Endothelial cell of umbilical vein (primary cell): ENCODE measurements at regions of chr11 and their contacts with region 1.

Region 1: DNA sequence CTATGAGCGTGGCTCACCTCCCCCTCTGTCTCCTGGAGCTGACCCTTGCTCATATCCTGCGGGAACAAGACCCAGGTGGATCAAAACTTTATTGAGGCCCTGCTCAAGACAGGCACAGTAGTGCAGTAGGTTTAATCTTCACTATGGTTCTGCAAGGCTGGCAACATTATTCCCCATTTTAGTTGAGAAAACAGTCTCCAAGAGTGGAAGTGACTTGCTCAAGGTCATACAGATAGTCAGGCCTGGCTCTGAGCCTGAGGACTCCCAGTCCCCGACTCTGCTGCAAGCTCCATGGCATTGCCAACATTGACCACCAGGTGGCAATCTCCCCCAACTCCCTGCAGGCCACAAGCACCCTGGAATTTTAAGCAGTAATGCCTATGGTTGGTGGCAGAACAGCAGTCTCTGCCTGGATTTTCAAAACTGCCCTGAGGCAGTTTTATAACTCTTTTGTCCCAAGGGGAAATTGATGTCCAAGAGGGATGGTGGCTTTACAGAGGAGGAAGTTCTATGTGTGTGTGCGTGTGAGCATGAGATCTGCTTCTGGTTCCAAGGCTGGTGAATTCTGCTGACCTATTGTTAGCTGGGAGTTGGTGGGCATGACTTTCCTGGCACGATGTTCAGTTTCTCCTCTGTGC is 34.1 kb downstream of the NEU3 start:
- DNase-seq: peak; percentile 83
- H3K4me3 ChIP-seq: no peak overlapping the region
- H3K27ac ChIP-seq: no peak overlapping the region
- H3K4me1 ChIP-seq: no peaks in the 10 kb centered on the region
- H3K27me3 ChIP-seq: peaks cover 0 to 2% of the 10 kb centered on the region in 2 experiments
- CTCF ChIP-seq: peak; percentile 94 to 97
- POLR2A ChIP-seq: no peak

Region 2: GRCh38 chr11:74909385-74909784 is 113.5 kb before region 1 on chr11:
- CTCF ChIA-PET with region 1: interaction called, 3 read pairs
- POLR2A ChIA-PET with region 1: no interaction called
- dilution Hi-C with region 1: loop called (anchors 25 kb)
- intact Hi-C with region 1: no loop called
- DNase-seq: no peak
- H3K4me3 ChIP-seq: no peak overlapping the region
- H3K27ac ChIP-seq: no peak overlapping the region
- H3K4me1 ChIP-seq: peaks cover 11% of the 10 kb centered on the region
- H3K27me3 ChIP-seq: no peaks in the 10 kb centered on the region
- CTCF ChIP-seq: no peak
- POLR2A ChIP-seq: no peak

Region 3: GRCh38 chr11:74929431-74930363 is 93.2 kb before region 1 on chr11:
- CTCF ChIA-PET with region 1: interaction called, 64 read pairs
- POLR2A ChIA-PET with region 1: no interaction called
- dilution Hi-C with region 1: loop called (anchors 25 kb)
- intact Hi-C with region 1: loop called (anchors 2 kb)
- DNase-seq: peak; percentile 84
- H3K4me3 ChIP-seq: no peak overlapping the region
- H3K27ac ChIP-seq: peak overlapping the region; percentile 23
- H3K4me1 ChIP-seq: peaks cover 25% of the 10 kb centered on the region
- H3K27me3 ChIP-seq: no peaks in the 10 kb centered on the region
- CTCF ChIP-seq: peak; percentile 70 to 78
- POLR2A ChIP-seq: no peak

Region 4: GRCh38 chr11:74966651-74967050 is 56.2 kb before region 1 on chr11:
- CTCF ChIA-PET with region 1: interaction called, 17 read pairs
- POLR2A ChIA-PET with region 1: no interaction called
- dilution Hi-C with region 1: no loop called
- intact Hi-C with region 1: no loop called
- DNase-seq: no peak
- H3K4me3 ChIP-seq: no peak overlapping the region
- H3K27ac ChIP-seq: peak overlapping the region; percentile 33
- H3K4me1 ChIP-seq: no peaks in the 10 kb centered on the region
- H3K27me3 ChIP-seq: no peaks in the 10 kb centered on the region
- CTCF ChIP-seq: no peak
- POLR2A ChIP-seq: no peak

Region 5: GRCh38 chr11:75087319-75088305 is 64.7 kb after region 1 on chr11:
- CTCF ChIA-PET with region 1: no interaction called
- POLR2A ChIA-PET with region 1: no interaction called
- dilution Hi-C with region 1: no loop called
- intact Hi-C with region 1: no loop called
- DNase-seq: no peak
- H3K4me3 ChIP-seq: no peak overlapping the region
- H3K27ac ChIP-seq: no peak overlapping the region
- H3K4me1 ChIP-seq: no peaks in the 10 kb centered on the region
- H3K27me3 ChIP-seq: peaks cover 4 to 32% of the 10 kb centered on the region in 2 experiments
- CTCF ChIP-seq: no peak
- POLR2A ChIP-seq: no peak

Region 6: DNA sequence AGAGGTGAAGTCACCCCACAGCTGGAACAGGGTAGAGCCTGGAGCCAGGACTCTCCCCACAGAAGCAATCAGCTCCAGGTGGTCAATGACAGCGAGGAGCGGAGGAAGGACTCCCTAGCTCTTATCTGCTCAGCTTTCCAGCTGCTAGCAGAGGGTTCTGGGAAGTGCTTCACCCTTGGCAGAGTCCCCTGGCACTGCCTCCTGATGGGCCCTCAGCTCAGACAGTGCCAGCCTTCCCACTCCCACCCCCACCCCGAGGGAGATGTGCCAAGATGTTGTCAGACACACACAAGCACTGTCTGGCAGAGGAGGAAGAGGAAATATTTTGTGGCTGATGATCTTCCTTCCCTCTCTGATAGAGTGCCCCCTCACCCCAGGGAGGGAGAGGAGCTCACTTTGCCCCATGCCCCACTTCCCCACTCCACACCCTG is 172.3 kb after region 1 on chr11:
- CTCF ChIA-PET with region 1: interaction called, 10 read pairs
- POLR2A ChIA-PET with region 1: no interaction called
- dilution Hi-C with region 1: no loop called
- intact Hi-C with region 1: no loop called
- DNase-seq: peak; percentile 10
- H3K4me3 ChIP-seq: no peak overlapping the region
- H3K27ac ChIP-seq: no peak overlapping the region
- H3K4me1 ChIP-seq: peaks cover 4% of the 10 kb centered on the region
- H3K27me3 ChIP-seq: peaks cover 0 to 2% of the 10 kb centered on the region in 2 experiments
- CTCF ChIP-seq: no peak
- POLR2A ChIP-seq: no peak

Region 7: GRCh38 chr11:75241036-75241905 is 218.4 kb after region 1 on chr11:
- CTCF ChIA-PET with region 1: interaction called, 159 read pairs
- POLR2A ChIA-PET with region 1: no interaction called
- dilution Hi-C with region 1: no loop called
- intact Hi-C with region 1: no loop called
- DNase-seq: peak; percentile 85
- H3K4me3 ChIP-seq: peak overlapping the region in 2 of 3 experiments; percentile 4 to 31
- H3K27ac ChIP-seq: no peak overlapping the region
- H3K4me1 ChIP-seq: peaks cover 7% of the 10 kb centered on the region
- H3K27me3 ChIP-seq: peaks cover 50 to 51% of the 10 kb centered on the region in 2 experiments
- CTCF ChIP-seq: peak; percentile 61 to 99
- POLR2A ChIP-seq: no peak